ENCODE measurements at regions of chr6 and their contacts with region 1.

Region 1: GRCh38 chr6:29294499-29294914 is 7.0 kb upstream of the OR14J1 start:
- DNase-seq: no peak
- H3K4me3 ChIP-seq: no peak overlapping the region
- H3K27ac ChIP-seq: no peak overlapping the region
- H3K4me1 ChIP-seq: no peaks in the 10 kb centered on the region
- H3K27me3 ChIP-seq: no peaks in the 10 kb centered on the region
- CTCF ChIP-seq: no peak
- POLR2A ChIP-seq: no peak

Region 2: GRCh38 chr6:28769626-28770402 is 524.7 kb before region 1 on chr6:
- intact Hi-C with region 1: loop called (anchors 10 kb)
- DNase-seq: no peak
- H3K4me3 ChIP-seq: no peak overlapping the region
- H3K27ac ChIP-seq: no peak overlapping the region
- H3K4me1 ChIP-seq: no peaks in the 10 kb centered on the region
- H3K27me3 ChIP-seq: peaks cover 5 to 99% of the 10 kb centered on the region in 2 donors
- CTCF ChIP-seq: no peak
- POLR2A ChIP-seq: no peak

Measured in breast epithelium (tissue), 4 donors.